CD4-positive, alpha-beta T cell (primary cell): ENCODE measurements at regions of chr10 and their contacts with region 1.

Region 1: DNA sequence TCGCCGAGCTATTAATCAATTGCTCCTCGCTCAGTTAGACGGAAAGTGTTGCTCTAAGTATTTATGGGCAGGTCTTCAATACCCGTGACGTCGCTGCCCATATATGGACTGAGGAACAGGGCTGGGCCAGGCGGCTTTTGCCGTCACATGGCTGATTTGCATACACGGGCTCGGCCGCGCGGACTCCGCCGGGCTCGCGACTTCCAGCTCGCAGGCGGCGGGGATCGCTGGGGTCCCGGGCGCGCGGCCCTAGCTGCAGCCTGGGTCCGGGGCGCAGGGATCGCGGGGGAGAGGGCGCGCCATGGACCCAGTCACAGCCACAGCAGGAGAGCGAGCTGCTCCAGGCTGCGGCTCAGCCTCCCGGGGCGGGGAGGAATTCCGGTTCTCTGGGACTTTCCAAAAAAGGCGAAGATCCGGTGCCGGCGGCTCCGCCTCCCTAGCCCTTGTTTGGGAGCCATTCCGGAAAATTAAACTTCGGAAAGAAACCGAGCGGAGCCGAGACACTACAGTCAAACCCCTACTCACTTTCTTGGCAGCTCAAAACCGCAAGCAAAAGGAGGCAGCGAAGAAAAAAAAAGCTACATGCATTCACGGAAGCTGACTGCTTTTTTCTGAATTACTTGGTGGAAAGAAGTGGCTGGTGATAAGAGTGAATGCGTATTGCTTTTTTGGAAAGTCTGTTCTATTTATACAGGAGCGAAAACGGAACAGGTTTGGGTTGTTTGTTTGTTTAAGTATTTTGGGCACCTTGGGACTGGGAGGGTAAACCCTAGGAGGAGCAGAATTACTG is at the start of gene EGR2:
- DNase-seq: peak; percentile 91 to 97 (median 95)
- ATAC-seq: peak; percentile 81
- H3K4me3 ChIP-seq: peak within 1 kb of the TSS; percentile 68
- H3K4me3 Mint-ChIP-seq: peak within 1 kb of the TSS; percentile 97
- H3K27ac ChIP-seq: peak within 1 kb of the TSS; percentile 70 to 92
- H3K27ac Mint-ChIP-seq: peak within 1 kb of the TSS; percentile 95
- H3K4me1 ChIP-seq: peaks cover 52% of the 10 kb centered on the region
- H3K4me1 Mint-ChIP-seq: peaks cover 53% of the 10 kb centered on the region
- H3K27me3 ChIP-seq: peaks cover 36 to 39% of the 10 kb centered on the region in 2 experiments
- H3K27me3 Mint-ChIP-seq: peaks cover 55% of the 10 kb centered on the region
- CTCF ChIP-seq: no peak
- total RNA-seq, gene EGR2: 3.2 to 5.4 TPM

Region 2: DNA sequence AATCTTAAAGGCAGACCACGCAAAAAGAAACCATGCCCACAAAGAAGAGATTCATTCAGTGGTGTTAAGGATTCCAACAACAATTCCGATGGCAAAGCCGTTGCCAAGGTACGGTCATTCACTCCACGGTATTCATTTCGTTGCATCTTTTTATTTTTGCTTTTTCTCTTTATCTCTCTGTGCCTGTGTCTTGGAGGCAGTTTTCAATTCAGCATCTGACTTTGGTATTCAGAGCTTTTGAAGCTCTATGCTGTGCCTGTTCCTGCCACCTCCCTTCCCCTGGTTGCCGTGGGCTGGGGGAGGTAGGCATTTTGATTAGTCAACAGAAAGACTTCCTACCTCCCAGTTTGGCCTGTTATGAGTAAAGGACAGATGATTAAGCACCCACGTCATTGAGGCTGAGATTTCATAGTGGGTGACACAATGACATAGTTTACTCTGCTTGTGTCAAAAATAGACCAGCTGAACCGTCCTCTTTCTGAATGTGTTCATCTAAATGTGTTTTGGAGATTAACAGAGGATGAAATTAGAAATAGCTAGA is 765.6 kb before region 1 on chr10:
- CTCF ChIA-PET with region 1: no interaction called
- POLR2A ChIA-PET with region 1: no interaction called
- intact Hi-C with region 1: loop called in 1 of 2 experiments (anchors 5 kb)
- DNase-seq: peak; percentile 54 to 93 (median 72)
- ATAC-seq: peak; percentile 81
- H3K4me3 ChIP-seq: peak overlapping the region; percentile 60
- H3K4me3 Mint-ChIP-seq: peak overlapping the region; percentile 83
- H3K27ac ChIP-seq: peak overlapping the region; percentile 83 to 87
- H3K27ac Mint-ChIP-seq: peak overlapping the region; percentile 91
- H3K4me1 ChIP-seq: peaks cover 64% of the 10 kb centered on the region
- H3K4me1 Mint-ChIP-seq: peaks cover 97% of the 10 kb centered on the region
- H3K27me3 ChIP-seq: no peaks in the 10 kb centered on the region
- H3K27me3 Mint-ChIP-seq: no peaks in the 10 kb centered on the region
- CTCF ChIP-seq: no peak

Region 3: DNA sequence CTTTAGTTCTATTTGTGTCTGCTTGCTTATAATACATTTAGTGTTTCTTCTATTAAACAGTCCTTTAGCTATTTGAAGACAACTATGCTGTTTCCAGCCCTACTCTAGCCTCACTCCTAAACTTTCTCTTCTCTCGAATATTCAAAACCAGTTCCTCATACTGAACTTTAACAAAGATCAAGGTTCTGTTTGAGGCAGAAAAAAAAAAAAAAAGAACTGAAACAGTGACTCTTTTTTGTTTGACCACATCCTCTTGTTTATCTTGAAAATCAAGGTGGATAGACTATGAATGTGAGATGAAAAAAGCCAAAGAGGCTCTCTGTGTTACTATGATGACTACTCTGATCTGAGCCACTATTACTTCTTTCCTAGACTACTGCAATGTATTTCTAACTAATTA is 288.1 kb before region 1 on chr10:
- CTCF ChIA-PET with region 1: no interaction called
- POLR2A ChIA-PET with region 1: no interaction called
- intact Hi-C with region 1: loop called (anchors 5 to 10 kb)
- DNase-seq: peak in 3 of 14 experiments; percentile 61 to 75 (median 69)
- ATAC-seq: peak; percentile 92
- H3K4me3 ChIP-seq: no peak overlapping the region
- H3K4me3 Mint-ChIP-seq: peak overlapping the region; percentile 78
- H3K27ac ChIP-seq: no peak overlapping the region
- H3K27ac Mint-ChIP-seq: peak overlapping the region; percentile 73
- H3K4me1 ChIP-seq: peaks cover 34% of the 10 kb centered on the region
- H3K4me1 Mint-ChIP-seq: peaks cover 41% of the 10 kb centered on the region
- H3K27me3 ChIP-seq: no peaks in the 10 kb centered on the region
- H3K27me3 Mint-ChIP-seq: no peaks in the 10 kb centered on the region
- CTCF ChIP-seq: no peak

Region 4: DNA sequence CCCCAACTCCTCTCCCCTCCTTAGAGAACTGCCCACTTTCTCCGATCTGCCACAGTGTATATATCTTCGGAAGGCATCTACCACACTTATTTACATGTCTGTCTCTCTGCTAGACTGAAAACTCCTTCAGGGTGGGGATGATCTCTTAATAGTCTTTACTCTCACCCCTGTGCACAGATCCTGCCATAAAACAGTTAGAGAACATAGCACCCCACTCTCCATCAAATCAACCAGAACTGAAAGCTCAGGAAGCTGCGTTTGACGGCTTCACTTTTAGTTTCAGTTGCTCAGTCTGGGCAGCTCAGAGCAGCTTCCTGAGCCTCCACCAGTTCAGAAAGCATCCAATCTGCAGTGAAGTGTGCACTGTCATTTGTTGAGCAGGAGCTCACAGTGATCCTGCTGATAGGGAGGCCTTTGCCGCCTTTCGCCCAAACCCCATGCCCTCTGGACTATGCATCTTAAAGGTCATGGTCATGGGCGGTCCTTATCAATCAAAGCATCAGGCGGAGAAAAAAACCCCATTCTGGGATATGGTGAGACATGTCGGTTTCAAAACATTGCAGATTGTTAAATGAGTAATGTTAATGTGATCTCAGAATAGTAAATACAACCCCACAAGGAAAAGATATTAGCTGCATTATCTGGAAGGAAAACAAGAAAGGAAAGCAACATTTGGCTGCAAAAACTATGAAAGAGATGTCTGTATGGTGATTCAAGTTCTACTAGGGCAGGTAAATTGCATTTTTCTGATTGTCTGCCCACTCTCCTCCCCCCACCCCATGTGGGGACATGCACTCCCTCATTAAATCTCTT is 179.1 kb before region 1 on chr10:
- CTCF ChIA-PET with region 1: interaction called, 22 read pairs
- POLR2A ChIA-PET with region 1: interaction called, 90 read pairs
- intact Hi-C with region 1: loop called (anchors 1 kb)
- DNase-seq: peak; percentile 44 to 87 (median 52)
- ATAC-seq: peak; percentile 91
- H3K4me3 ChIP-seq: peak overlapping the region; percentile 49
- H3K4me3 Mint-ChIP-seq: no peak overlapping the region
- H3K27ac ChIP-seq: peak overlapping the region; percentile 70 to 78
- H3K27ac Mint-ChIP-seq: no peak overlapping the region
- H3K4me1 ChIP-seq: peaks cover 32% of the 10 kb centered on the region
- H3K4me1 Mint-ChIP-seq: peaks cover 4% of the 10 kb centered on the region
- H3K27me3 ChIP-seq: no peaks in the 10 kb centered on the region
- H3K27me3 Mint-ChIP-seq: no peaks in the 10 kb centered on the region
- CTCF ChIP-seq: no peak

Region 5: GRCh38 chr10:62732841-62733653 is 83.5 kb before region 1 on chr10:
- CTCF ChIA-PET with region 1: interaction called, 16 read pairs
- POLR2A ChIA-PET with region 1: interaction called, 38 read pairs
- intact Hi-C with region 1: loop called (anchors 1 to 5 kb)
- DNase-seq: peak in 13 of 14 experiments; percentile 12 to 90 (median 39)
- ATAC-seq: peak; percentile 87
- H3K4me3 ChIP-seq: no peak overlapping the region
- H3K4me3 Mint-ChIP-seq: peak overlapping the region; percentile 56
- H3K27ac ChIP-seq: peak overlapping the region; percentile 33 to 66
- H3K27ac Mint-ChIP-seq: no peak overlapping the region
- H3K4me1 ChIP-seq: peaks cover 49% of the 10 kb centered on the region
- H3K4me1 Mint-ChIP-seq: peaks cover 6% of the 10 kb centered on the region
- H3K27me3 ChIP-seq: no peaks in the 10 kb centered on the region
- H3K27me3 Mint-ChIP-seq: no peaks in the 10 kb centered on the region
- CTCF ChIP-seq: no peak

Region 6: GRCh38 chr10:62772186-62772974 is 44.1 kb before region 1 on chr10:
- CTCF ChIA-PET with region 1: no interaction called
- POLR2A ChIA-PET with region 1: no interaction called
- intact Hi-C with region 1: no loop called
- DNase-seq: no peak
- ATAC-seq: no peak
- H3K4me3 ChIP-seq: no peak overlapping the region
- H3K4me3 Mint-ChIP-seq: no peak overlapping the region
- H3K27ac ChIP-seq: no peak overlapping the region
- H3K27ac Mint-ChIP-seq: no peak overlapping the region
- H3K4me1 ChIP-seq: no peaks in the 10 kb centered on the region
- H3K4me1 Mint-ChIP-seq: no peaks in the 10 kb centered on the region
- H3K27me3 ChIP-seq: no peaks in the 10 kb centered on the region
- H3K27me3 Mint-ChIP-seq: no peaks in the 10 kb centered on the region
- CTCF ChIP-seq: no peak

Region 7: DNA sequence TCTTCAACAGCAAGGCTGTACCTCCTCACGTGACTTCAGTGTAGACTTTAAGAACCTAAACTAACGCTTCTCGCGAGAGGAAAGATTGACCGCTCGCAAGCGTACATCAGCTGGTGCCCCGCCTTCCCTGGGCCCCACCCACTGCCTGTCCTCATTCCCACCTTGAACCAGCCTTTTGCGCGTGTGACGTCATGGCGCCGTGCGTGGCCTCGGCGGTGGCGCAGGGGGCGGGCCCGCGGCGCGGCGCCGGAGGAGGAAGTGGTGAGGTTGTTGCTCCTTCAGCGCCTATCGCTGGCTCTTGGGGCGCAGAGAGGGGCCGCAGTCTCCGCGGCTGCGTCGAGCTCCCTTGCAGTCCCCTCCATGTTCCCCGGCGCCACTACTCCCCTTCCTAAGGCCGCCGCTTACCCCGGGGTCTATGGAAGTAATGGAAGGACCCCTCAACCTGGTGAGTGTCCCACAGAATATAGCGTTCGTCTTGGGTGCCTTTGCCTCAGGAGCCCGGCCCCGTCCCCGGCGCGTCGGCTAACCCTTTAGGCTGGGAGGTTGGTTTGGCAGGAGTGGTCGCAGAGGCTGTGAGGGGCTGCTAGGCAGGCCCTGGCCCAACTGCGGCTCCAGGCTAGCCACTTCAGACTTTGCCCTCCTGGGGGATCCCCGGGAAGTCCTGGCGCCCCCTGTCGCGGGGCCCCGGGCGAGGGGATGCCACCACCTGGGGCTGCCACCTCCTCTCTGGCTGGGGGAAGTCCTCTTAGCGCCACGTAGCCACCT is 316.7 kb after region 1 on chr10 and contains the start of gene NRBF2:
- CTCF ChIA-PET with region 1: interaction called, 6 read pairs
- POLR2A ChIA-PET with region 1: interaction called, 31 read pairs
- intact Hi-C with region 1: loop called (anchors 2 to 5 kb)
- DNase-seq: peak; percentile 91 to 99 (median 95)
- ATAC-seq: peak; percentile 90
- H3K4me3 ChIP-seq: peak within 1 kb of the TSS; percentile 89
- H3K4me3 Mint-ChIP-seq: peak within 1 kb of the TSS; percentile 94
- H3K27ac ChIP-seq: peak within 1 kb of the TSS; percentile 97 to 98
- H3K27ac Mint-ChIP-seq: peak within 1 kb of the TSS; percentile 88
- H3K4me1 ChIP-seq: peaks cover 44% of the 10 kb centered on the region
- H3K4me1 Mint-ChIP-seq: peaks cover 45% of the 10 kb centered on the region
- H3K27me3 ChIP-seq: no peaks in the 10 kb centered on the region
- H3K27me3 Mint-ChIP-seq: peaks cover 9% of the 10 kb centered on the region
- CTCF ChIP-seq: peak; percentile 22
- total RNA-seq, gene NRBF2: 25.3 to 25.6 TPM

Region 8: GRCh38 chr10:63547628-63548360 is 731.3 kb after region 1 on chr10:
- CTCF ChIA-PET with region 1: no interaction called
- POLR2A ChIA-PET with region 1: no interaction called
- intact Hi-C with region 1: no loop called
- DNase-seq: no peak
- ATAC-seq: no peak
- H3K4me3 ChIP-seq: no peak overlapping the region
- H3K4me3 Mint-ChIP-seq: no peak overlapping the region
- H3K27ac ChIP-seq: no peak overlapping the region
- H3K27ac Mint-ChIP-seq: no peak overlapping the region
- H3K4me1 ChIP-seq: no peaks in the 10 kb centered on the region
- H3K4me1 Mint-ChIP-seq: peaks cover 28% of the 10 kb centered on the region
- H3K27me3 ChIP-seq: no peaks in the 10 kb centered on the region
- H3K27me3 Mint-ChIP-seq: no peaks in the 10 kb centered on the region
- CTCF ChIP-seq: no peak